ENCODE measurements at regions of chr15 and their contacts with region 1.

Region 1: DNA sequence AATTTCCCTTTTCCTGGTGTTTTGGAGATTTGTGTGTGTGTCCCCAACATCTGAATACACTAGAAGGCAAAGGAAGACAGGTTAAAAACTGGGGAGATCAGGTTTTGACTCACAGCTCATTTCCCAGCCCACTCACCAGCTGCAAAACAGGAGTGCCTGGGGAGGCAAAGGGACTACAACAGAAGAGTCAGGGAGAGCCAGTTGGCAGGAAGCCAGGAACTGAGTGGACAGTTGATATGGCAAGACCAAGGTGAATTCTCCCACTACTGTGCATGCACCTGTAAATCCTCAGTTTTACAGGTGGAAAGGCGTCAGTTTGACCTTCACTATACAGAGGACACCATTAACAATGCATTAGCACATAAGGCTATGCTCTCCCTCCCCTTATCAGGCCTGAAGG is 901.5 kb upstream of the SEMA6D start:
- DNase-seq: no peak
- H3K4me3 ChIP-seq: no peak overlapping the region
- H3K4me3 Mint-ChIP-seq: no peak overlapping the region
- H3K27ac ChIP-seq: no peak overlapping the region
- H3K27ac Mint-ChIP-seq: no peak overlapping the region
- H3K4me1 ChIP-seq: no peaks in the 10 kb centered on the region
- H3K4me1 Mint-ChIP-seq: no peaks in the 10 kb centered on the region
- H3K27me3 ChIP-seq: no peaks in the 10 kb centered on the region
- H3K27me3 Mint-ChIP-seq: peaks cover 0 to 1% (median 0%) of the 10 kb centered on the region in 3 donors
- CTCF ChIP-seq: no peak

Region 2: GRCh38 chr15:46751303-46751702 is 64.5 kb before region 1 on chr15:
- intact Hi-C with region 1: loop called in 1 of 2 experiments (anchors 10 kb)
- DNase-seq: no peak
- H3K4me3 ChIP-seq: no peak overlapping the region
- H3K4me3 Mint-ChIP-seq: no peak overlapping the region
- H3K27ac ChIP-seq: no peak overlapping the region
- H3K27ac Mint-ChIP-seq: no peak overlapping the region
- H3K4me1 ChIP-seq: no peaks in the 10 kb centered on the region
- H3K4me1 Mint-ChIP-seq: no peaks in the 10 kb centered on the region
- H3K27me3 ChIP-seq: no peaks in the 10 kb centered on the region
- H3K27me3 Mint-ChIP-seq: no peaks in the 10 kb centered on the region
- CTCF ChIP-seq: no peak

Measured in CD14-positive monocyte (primary cell).